ENCODE measurements at regions of chr1 and their contacts with region 1.

Region 1: DNA sequence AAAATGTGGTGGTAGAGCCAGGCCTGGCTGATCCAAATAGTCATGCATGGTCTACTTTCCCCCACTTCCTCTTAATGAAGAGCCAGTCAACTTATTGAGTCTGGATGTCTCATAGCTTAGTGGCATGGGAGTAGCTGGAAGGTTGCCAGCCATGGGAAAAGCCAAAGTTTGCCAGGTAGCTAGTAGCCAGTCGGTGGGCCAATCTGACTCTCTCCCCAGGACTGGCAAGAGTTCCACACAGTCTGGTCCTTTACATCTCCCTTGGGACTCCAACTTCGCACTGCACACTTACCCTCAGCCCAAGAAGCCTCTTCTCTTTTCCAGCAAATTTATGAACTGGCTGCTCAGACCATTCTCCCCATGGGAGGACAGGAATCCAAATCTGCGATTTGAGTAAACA is 8.3 kb downstream of the WARS2 start:
- DNase-seq: no peak
- ATAC-seq: no peak
- H3K4me3 ChIP-seq: no peak overlapping the region
- H3K27ac ChIP-seq: no peak overlapping the region
- H3K4me1 ChIP-seq: no peaks in the 10 kb centered on the region
- H3K27me3 ChIP-seq: no peaks in the 10 kb centered on the region
- CTCF ChIP-seq: no peak
- EP300 ChIP-seq: no peak
- POLR2A ChIP-seq: no peak
- RAD21 ChIP-seq: no peak

Region 2: DNA sequence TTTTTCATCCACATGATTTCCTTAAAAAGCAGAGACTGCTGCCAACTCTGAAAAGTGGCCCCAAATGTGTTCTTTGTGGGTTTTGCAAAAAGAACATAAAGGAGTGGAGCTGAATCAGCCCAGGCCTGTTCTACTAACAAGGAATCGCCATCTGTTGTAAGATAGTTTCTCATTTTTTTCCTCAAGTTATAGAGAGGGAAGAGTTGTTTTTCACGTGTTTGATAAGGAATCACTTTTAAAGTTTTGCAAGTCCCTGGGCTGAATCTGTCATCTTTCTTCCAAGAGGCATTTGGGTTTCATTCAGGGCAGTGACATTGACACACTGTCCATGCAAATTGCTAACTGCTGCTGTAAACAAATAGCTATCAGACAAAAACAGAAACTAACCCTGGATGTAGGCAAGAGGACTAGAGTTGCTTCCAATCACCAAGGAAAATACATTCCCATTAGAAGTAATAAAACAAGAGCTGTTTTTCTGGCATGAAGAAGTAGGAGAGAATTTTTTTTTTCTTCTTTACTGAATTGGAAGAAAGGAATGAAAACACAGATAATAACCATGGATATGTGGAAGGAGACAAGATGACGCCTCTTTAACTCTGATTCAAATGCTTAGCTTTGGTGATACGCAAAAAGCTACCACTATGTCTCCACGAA is 85.3 kb before region 1 on chr1:
- CTCF ChIA-PET with region 1: no interaction called
- POLR2A ChIA-PET with region 1: no interaction called
- RAD21 ChIA-PET with region 1: no interaction called
- SMC1A ChIA-PET with region 1: no interaction called
- in situ Hi-C with region 1: no loop called
- intact Hi-C with region 1: loop called (anchors 5 kb)
- DNase-seq: no peak
- ATAC-seq: no peak
- H3K4me3 ChIP-seq: no peak overlapping the region
- H3K27ac ChIP-seq: no peak overlapping the region
- H3K4me1 ChIP-seq: no peaks in the 10 kb centered on the region
- H3K27me3 ChIP-seq: no peaks in the 10 kb centered on the region
- CTCF ChIP-seq: no peak
- EP300 ChIP-seq: no peak
- POLR2A ChIP-seq: no peak
- RAD21 ChIP-seq: no peak